Activated B cell treated with CpG ODN at 0.5 μM for 24 hours (primary cell): ENCODE measurements at regions of chr6 and their contacts with region 1.

Region 1: GRCh38 chr6:29649701-29650673 is 6.9 kb upstream of the MOG start:
- DNase-seq: peak; percentile 87
- ATAC-seq: peak; percentile 94
- H3K4me3 Mint-ChIP-seq: peak overlapping the region; percentile 97
- H3K27ac Mint-ChIP-seq: peak overlapping the region; percentile 100
- H3K4me1 Mint-ChIP-seq: peaks cover 17% of the 10 kb centered on the region
- H3K27me3 Mint-ChIP-seq: no peaks in the 10 kb centered on the region
- CTCF ChIP-seq: peak; percentile 89

Region 2: GRCh38 chr6:29552512-29553051 is 97.4 kb before region 1 on chr6:
- CTCF ChIA-PET with region 1: no interaction called
- POLR2A ChIA-PET with region 1: no interaction called
- intact Hi-C with region 1: loop called (anchors 5 kb)
- DNase-seq: no peak
- ATAC-seq: peak; percentile 87
- H3K4me3 Mint-ChIP-seq: peak overlapping the region; percentile 86
- H3K27ac Mint-ChIP-seq: no peak overlapping the region
- H3K4me1 Mint-ChIP-seq: peaks cover 13% of the 10 kb centered on the region
- H3K27me3 Mint-ChIP-seq: peaks cover 41% of the 10 kb centered on the region
- CTCF ChIP-seq: no peak

Region 3: DNA sequence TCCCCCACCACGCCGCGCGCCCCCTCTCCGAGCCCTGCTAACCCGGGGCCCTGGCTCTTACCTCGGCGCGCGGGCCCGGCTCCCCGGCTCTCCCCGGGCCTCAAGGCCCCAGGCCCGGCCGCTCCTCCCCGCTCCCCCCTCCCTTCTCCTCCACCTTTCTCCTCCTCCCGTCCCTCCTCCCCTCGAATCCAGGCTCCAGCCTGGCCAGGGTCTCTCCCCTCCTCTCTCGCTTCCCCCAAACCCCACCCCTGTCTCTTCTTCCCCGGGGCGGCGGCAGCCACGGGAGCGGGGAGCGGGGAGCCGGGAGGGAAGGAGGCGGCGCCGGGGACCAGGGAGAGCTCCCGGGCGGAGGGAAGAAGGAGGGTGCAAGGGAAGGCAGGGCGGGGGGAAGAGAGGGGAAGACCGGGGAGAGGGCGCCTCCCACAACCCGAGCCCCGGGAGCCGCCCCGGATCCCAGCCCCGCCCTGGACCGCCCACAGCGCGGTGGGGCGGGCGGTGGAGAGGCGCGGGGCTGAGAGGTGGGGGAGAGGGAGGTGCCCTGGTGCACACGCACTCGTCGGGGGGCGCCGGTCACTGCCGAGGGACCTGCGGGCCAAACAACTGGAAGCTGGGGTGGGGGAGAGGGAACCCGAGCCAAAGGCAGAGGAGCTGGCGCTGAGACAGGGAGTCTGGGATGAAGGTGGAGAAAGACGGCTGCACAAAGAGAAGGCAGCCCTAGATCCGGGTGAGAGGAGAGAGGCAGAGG is 17.0 kb before region 1 on chr6 and contains the start of gene GABBR1:
- CTCF ChIA-PET with region 1: interaction called, 30 read pairs
- POLR2A ChIA-PET with region 1: interaction called, 47 read pairs
- intact Hi-C with region 1: loop called (anchors 1 kb)
- DNase-seq: peak; percentile 80
- ATAC-seq: peak; percentile 81
- H3K4me3 Mint-ChIP-seq: peak within 1 kb of the TSS; percentile 84
- H3K27ac Mint-ChIP-seq: peak within 1 kb of the TSS; percentile 86
- H3K4me1 Mint-ChIP-seq: peaks cover 68% of the 10 kb centered on the region
- H3K27me3 Mint-ChIP-seq: no peaks in the 10 kb centered on the region
- CTCF ChIP-seq: no peak
- total RNA-seq, gene GABBR1: 88.9 and 117 TPM in 2 replicates

Region 4: GRCh38 chr6:29723262-29723665 is 73.3 kb after region 1 on chr6 and contains the start of gene HLA-F:
- CTCF ChIA-PET with region 1: interaction called, 6 read pairs
- POLR2A ChIA-PET with region 1: interaction called, 9 read pairs
- intact Hi-C with region 1: loop called (anchors 5 kb)
- DNase-seq: peak; percentile 76
- ATAC-seq: peak; percentile 89
- H3K4me3 Mint-ChIP-seq: peak within 1 kb of the TSS; percentile 94
- H3K27ac Mint-ChIP-seq: peak within 1 kb of the TSS; percentile 98
- H3K4me1 Mint-ChIP-seq: peaks cover 61% of the 10 kb centered on the region
- H3K27me3 Mint-ChIP-seq: no peaks in the 10 kb centered on the region
- CTCF ChIP-seq: no peak
- total RNA-seq, gene HLA-F: 726 and 736 TPM in 2 replicates

Region 5: DNA sequence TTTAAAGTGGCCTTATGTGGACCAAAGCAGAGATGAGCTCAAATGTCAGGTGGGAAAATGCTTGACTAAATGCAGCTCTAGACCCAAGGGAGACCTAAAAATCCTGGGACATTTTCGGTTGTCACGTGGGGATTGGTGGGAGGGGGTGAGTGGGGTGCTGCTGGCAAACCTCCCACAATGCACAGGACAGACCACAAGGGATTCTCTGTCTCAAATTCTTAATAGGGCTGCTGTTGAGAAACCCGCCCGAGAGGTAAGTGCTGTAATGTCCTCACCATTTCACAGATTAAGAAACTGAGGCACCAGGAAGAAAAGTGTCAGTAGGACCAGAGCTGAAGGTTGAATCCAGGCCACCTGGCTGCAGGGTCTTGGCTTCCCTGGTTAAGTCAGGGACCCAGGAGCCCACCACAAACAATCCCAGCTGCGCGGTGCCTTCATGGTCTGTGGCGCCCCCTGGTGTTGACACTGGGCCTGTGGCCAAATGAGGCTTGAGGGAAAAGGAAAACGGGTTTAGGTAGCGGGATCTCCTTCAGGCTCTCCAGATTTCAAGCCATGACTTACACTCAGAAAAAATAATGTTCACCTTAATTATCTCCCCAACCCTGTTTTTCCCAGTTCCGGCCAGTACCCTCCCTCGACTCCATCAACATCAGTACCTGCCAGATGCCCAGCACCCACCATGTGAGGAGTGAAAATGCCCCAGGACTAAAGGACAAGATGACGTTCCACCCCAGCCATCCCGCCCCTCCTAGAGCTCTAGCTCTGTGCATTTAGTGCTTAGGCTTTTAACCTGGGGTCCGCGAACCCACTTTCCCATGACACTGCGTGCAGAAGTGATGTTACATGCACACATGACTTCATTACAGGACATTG is 184.8 kb after region 1 on chr6:
- CTCF ChIA-PET with region 1: interaction called, 6 read pairs
- POLR2A ChIA-PET with region 1: no interaction called
- intact Hi-C with region 1: loop called (anchors 2 kb)
- DNase-seq: peak; percentile 45
- ATAC-seq: peak; percentile 40
- H3K4me3 Mint-ChIP-seq: no peak overlapping the region
- H3K27ac Mint-ChIP-seq: no peak overlapping the region
- H3K4me1 Mint-ChIP-seq: no peaks in the 10 kb centered on the region
- H3K27me3 Mint-ChIP-seq: peaks cover 67% of the 10 kb centered on the region
- CTCF ChIP-seq: no peak

Region 6: DNA sequence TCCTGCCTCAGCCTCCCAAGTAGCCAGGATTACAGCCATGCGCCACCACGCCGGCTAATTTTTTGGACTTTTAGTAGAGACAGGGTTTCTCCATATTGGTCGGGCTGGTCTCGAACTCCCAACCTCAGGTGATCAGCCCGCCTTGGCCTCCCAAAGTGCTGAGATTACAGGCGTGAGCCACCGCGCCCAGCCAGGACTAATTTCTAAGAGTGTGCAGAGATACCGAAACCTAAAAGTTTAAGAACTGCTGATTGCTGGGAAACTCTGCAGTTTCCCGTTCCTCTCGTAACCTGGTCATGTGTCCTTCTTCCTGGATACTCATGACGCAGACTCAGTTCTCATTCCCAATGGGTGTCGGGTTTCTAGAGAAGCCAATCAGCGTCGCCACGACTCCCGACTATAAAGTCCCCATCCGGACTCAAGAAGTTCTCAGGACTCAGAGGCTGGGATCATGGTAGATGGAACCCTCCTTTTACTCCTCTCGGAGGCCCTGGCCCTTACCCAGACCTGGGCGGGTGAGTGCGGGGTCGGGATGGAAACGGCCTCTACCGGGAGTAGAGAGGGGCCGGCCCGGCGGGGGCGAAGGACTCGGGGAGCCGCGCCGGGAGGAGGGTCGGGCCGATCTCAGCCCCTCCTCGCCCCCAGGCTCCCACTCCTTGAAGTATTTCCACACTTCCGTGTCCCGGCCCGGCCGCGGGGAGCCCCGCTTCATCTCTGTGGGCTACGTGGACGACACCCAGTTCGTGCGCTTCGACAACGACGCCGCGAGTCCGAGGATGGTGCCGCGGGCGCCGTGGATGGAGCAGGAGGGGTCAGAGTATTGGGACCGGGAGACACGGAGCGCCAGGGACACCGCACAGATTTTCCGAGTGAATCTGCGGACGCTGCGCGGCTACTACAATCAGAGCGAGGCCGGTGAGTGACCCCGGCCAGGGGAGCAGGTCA is 839.4 kb after region 1 on chr6 and contains the start of gene HLA-E:
- CTCF ChIA-PET with region 1: no interaction called
- POLR2A ChIA-PET with region 1: no interaction called
- intact Hi-C with region 1: no loop called
- DNase-seq: peak; percentile 70
- ATAC-seq: peak; percentile 83
- H3K4me3 Mint-ChIP-seq: peak within 1 kb of the TSS; percentile 98
- H3K27ac Mint-ChIP-seq: peak within 1 kb of the TSS; percentile 97
- H3K4me1 Mint-ChIP-seq: peaks cover 58% of the 10 kb centered on the region
- H3K27me3 Mint-ChIP-seq: no peaks in the 10 kb centered on the region
- CTCF ChIP-seq: no peak
- total RNA-seq, gene HLA-E: 737 and 740 TPM in 2 replicates